Activated naive CD4-positive, alpha-beta T cell treated with anti-CD3 and anti-CD28 coated beads, Interleukin-2, amount 10 ng/mL, durations not matched to agents 7 days and 5 days (primary cell): ENCODE measurements at regions of chr14 and their contacts with region 1.

Region 1: DNA sequence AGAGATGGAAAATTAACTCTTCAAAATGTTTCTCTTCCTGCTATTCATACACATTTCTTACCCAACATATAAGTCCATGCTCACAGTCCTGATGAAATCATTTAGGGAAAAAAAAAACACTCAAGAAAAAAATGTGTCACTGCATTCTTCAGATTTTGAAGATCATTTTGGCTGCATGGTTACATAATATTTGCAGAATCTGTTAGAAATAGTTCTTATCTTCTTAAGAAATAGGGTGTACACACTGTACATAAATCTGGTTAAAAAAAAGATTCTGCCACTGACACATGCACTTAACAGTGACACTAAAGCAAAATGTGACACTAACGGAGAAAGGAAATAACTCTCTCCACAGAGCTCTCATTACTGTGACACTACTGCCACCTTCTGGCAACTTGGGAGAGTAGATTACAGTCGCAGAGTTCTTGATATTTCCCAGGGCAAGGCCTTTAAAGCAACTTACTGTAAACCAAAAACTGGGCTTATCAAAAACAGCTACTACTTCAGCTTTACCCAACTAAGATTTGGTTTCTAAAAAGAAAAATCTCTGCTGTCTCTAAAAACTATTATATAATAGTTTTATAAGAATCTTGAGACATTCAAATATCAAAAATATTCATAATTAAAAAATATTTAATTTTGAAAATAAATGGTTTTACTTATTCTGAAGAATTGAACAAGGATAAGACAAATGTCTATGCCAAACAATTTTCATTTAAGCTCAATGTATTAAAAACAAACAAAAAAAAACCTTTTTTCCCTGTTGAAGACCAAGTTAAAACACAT is 65.0 kb downstream of the SETD3 start:
- DNase-seq: peak; percentile 77
- H3K4me3 Mint-ChIP-seq: no peak overlapping the region
- H3K27ac Mint-ChIP-seq: no peak overlapping the region
- H3K4me1 Mint-ChIP-seq: peaks cover 16% of the 10 kb centered on the region
- H3K27me3 Mint-ChIP-seq: no peaks in the 10 kb centered on the region

Region 2: GRCh38 chr14:99320105-99320572 is 95.5 kb before region 1 on chr14:
- CTCF ChIA-PET with region 1: interaction called, 28 read pairs
- DNase-seq: peak; percentile 79
- H3K4me3 Mint-ChIP-seq: no peak overlapping the region
- H3K27ac Mint-ChIP-seq: no peak overlapping the region
- H3K4me1 Mint-ChIP-seq: no peaks in the 10 kb centered on the region
- H3K27me3 Mint-ChIP-seq: no peaks in the 10 kb centered on the region

Region 3: GRCh38 chr14:99393047-99393655 is 22.5 kb before region 1 on chr14:
- CTCF ChIA-PET with region 1: interaction called, 14 read pairs
- DNase-seq: peak; percentile 52
- H3K4me3 Mint-ChIP-seq: no peak overlapping the region
- H3K27ac Mint-ChIP-seq: peak overlapping the region; percentile 24
- H3K4me1 Mint-ChIP-seq: peaks cover 3% of the 10 kb centered on the region
- H3K27me3 Mint-ChIP-seq: no peaks in the 10 kb centered on the region